ENCODE measurements at regions of chr11 and their contacts with region 1.

Region 1: GRCh38 chr11:96412761-96413381 is 23.1 kb downstream of the JRKL start:
- DNase-seq: no peak
- H3K4me3 ChIP-seq: no peak overlapping the region
- H3K27ac ChIP-seq: no peak overlapping the region
- H3K4me1 ChIP-seq: no peaks in the 10 kb centered on the region
- H3K27me3 ChIP-seq: no peaks in the 10 kb centered on the region
- CTCF ChIP-seq: no peak

Region 2: DNA sequence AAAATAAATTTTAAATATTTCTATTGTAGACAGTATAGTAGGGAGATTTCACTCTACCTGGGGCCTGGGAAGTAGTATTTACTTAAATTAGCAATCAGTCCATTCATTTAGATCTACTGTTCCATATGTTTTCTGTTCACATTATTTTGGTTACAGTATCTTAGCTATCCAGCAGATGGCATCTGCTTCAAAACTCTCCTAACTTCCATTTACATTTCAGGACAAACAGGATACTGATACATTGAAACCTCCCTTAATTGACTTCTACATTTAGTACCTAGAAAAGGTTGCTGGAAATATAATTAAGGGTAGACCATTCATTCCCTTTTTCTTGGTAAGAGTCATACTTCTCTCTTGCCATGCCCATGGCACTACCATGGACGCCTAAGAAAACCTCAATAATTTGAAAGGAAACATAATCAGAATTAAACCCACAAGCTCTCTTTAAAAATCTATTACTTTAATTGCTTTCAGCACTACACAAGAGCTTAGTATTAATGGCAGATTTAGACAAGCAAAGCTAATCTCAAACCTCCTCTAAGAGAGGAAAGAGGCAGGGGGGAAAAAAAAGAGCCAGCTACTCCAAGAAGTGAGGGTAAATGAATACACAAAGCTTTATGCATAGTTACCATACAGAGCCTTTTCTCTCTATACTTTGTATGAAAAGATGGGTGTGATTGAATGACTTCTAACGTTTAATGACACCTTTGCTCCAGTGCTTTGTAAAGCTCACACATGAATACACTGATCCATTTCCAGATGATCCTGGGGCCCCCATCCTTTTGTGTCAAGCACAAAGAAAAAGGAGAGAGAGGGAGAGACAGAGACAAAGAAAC is 357.8 kb before region 1 on chr11:
- CTCF ChIA-PET with region 1: interaction called, 10 read pairs
- POLR2A ChIA-PET with region 1: no interaction called
- intact Hi-C with region 1: no loop called
- DNase-seq: peak; percentile 70
- H3K4me3 ChIP-seq: no peak overlapping the region
- H3K27ac ChIP-seq: no peak overlapping the region
- H3K4me1 ChIP-seq: peaks cover 38% of the 10 kb centered on the region
- H3K27me3 ChIP-seq: no peaks in the 10 kb centered on the region
- CTCF ChIP-seq: peak; percentile 79